ENCODE measurements at regions of chr14 and their contacts with region 1.

Region 1: GRCh38 chr14:35261774-35262173 is 30.4 kb upstream of the PSMA6 start:
- DNase-seq: peak; percentile 53 to 68 (median 67)
- H3K4me3 ChIP-seq: no peak overlapping the region
- H3K27ac ChIP-seq: no peak overlapping the region
- H3K4me1 ChIP-seq: peaks cover 0 to 4% (median 0%) of the 10 kb centered on the region in 4 experiments
- H3K27me3 ChIP-seq: no peaks in the 10 kb centered on the region

Region 2: DNA sequence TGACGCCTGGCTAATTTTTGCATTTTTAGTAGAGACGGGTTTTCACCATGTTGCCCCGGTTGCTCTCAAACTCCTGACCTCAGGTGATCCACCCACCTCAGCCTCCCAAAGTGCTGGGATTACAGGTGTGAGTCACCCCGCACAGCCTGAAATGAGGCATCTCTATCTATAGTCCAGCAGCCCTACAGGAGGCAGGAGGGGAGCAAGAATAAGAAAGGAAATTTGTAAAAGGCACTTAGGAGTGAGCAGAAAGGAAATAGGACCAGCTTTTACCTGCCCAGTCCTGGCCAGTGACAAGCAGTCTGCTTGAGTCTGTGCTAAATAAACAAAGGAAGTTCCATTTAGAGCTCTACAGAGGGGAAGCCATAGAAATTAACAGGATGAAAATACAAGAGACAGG is 15.4 kb after region 1 on chr14:
- CTCF ChIA-PET with region 1: interaction called, 27 read pairs
- POLR2A ChIA-PET with region 1: no interaction called
- DNase-seq: no peak
- H3K4me3 ChIP-seq: no peak overlapping the region
- H3K27ac ChIP-seq: peak overlapping the region in 1 of 2 experiments; percentile 30
- H3K4me1 ChIP-seq: peaks cover 0 to 16% (median 7%) of the 10 kb centered on the region in 4 experiments
- H3K27me3 ChIP-seq: no peaks in the 10 kb centered on the region

Region 3: DNA sequence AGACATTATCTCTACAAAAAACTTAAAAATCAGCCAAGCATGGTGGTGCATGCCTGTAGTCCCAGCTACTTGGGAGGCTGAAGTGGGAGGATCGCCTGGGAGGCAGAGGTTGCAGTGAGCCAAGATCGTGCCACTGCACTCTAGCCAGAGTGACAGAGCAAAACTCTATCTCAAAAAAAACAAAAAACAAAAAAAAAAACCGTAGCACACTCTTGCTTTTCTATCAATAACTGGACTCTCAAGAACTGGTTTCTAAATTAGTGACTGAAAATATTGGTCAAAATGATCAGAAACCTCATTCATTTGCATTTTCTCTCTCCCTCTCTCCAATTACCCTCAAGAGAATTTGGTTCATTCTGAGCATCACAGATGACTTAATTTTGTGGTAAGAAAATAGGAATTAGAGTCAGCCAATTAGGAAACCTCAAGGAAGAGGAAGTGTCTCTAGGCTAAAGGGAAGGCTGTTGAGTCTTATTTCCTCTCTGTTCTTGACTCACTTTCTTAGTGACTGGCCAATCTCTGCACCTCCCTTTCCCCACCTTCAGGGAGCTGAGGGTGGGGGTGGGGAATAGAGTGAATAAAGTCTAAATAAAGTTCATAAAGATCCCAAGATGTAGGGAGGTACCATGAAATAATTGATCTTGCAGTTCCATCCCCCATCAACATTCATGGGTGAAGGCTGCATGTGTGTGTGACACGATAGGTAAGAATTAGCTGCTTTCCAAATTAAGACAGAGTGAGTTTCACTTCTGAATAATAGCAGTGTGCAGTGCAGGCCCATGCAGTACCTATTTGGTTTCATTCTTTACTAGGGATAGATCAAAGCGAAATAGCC is 23.6 kb after region 1 on chr14:
- CTCF ChIA-PET with region 1: interaction called, 27 read pairs
- POLR2A ChIA-PET with region 1: interaction called, 4 read pairs
- DNase-seq: peak; percentile 78 to 90 (median 85)
- H3K4me3 ChIP-seq: peak overlapping the region in 6 of 7 experiments; percentile 39 to 66 (median 53)
- H3K27ac ChIP-seq: peak overlapping the region; percentile 77 to 89
- H3K4me1 ChIP-seq: peaks cover 52 to 92% (median 68%) of the 10 kb centered on the region in 4 experiments
- H3K27me3 ChIP-seq: no peaks in the 10 kb centered on the region

Region 4: DNA sequence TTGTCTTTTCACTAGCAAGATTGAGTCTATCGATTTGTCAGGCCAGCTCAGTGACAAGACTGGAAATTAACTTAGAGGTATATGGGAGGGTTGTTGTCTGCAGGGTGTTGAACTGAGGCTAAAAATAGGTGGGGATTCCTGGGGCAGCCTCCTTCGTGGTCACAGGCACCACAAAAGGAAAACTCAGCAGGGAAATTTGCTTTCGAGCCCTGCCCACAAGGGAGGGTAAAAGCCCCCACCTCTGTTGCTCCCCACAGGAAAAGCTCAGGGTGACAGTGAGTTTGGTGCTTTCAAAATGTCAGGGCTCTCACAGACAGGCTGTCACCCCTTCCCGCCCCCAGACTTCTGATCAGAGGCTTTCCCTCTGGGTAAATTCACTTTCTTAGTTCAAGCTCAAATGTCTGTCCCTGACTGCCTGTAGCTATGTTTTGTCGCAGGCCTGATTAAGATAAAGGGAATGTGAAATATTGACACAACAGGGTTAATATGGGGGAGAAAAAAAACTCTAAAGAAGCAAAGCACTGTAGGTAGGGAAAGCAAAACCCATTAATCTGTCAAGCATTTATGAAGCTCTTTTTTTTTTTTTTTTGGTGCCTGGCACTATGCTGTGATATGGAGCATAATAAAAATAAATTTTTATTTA is 154.5 kb after region 1 on chr14:
- CTCF ChIA-PET with region 1: interaction called, 14 read pairs
- POLR2A ChIA-PET with region 1: no interaction called
- DNase-seq: peak in 2 of 3 donors; percentile 25 to 31
- H3K4me3 ChIP-seq: peak overlapping the region in 4 of 7 experiments; percentile 2 to 41 (median 20)
- H3K27ac ChIP-seq: peak overlapping the region in 1 of 2 experiments; percentile 49
- H3K4me1 ChIP-seq: peaks cover 0 to 22% (median 18%) of the 10 kb centered on the region in 4 experiments
- H3K27me3 ChIP-seq: no peaks in the 10 kb centered on the region

Measured in common myeloid progenitor, CD34-positive (primary cell).